Activated CD4-positive, alpha-beta T cell treated with anti-CD3 and anti-CD28 coated beads for 36 hours (primary cell): ENCODE measurements at regions of chr4 and their contacts with region 1.

Region 1: DNA sequence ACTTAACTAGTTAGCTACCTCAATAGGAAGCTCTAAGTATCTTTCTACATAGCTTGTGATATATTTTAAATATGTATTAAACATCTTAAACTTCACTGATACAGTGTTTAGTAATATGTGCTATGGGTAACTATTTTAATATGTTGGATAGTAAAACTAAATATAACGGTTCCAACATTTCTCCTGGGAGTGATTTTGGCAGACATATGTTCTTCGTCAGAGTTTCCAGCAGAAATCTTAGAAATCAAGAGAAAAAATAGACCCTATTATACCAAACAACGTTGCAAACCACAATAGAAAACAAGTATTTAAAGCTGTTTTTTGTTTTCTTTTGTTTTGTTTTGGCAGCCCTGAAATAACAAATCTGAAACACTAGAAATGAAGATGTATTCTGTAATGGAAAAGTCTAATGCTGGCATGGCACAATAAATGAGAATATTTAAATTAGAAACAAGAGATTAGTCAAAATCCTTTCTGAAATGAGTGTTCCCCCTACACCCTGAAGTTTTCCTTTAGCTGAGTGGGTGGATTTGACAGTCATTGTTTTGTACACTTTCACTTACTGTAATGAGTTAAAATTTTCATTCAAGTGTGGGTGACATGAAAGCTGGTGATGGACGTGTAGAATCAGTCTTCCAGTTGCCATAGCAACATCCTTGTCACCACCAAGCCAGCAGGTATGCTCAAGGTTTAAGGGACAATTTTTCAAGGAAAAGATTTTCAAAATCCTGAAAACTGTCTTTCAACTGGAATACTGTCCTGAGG is 233.5 kb downstream of the SCFD2 start:
- DNase-seq: peak; percentile 49
- ATAC-seq: peak; percentile 83
- H3K4me3 Mint-ChIP-seq: no peak overlapping the region
- H3K27ac Mint-ChIP-seq: peak overlapping the region; percentile 88
- H3K4me1 Mint-ChIP-seq: peaks cover 34% of the 10 kb centered on the region
- H3K27me3 Mint-ChIP-seq: no peaks in the 10 kb centered on the region

Region 2: GRCh38 chr4:53068755-53069330 is 63.5 kb before region 1 on chr4:
- CTCF ChIA-PET with region 1: no interaction called
- POLR2A ChIA-PET with region 1: no interaction called
- intact Hi-C with region 1: no loop called
- DNase-seq: no peak
- ATAC-seq: no peak
- H3K4me3 Mint-ChIP-seq: no peak overlapping the region
- H3K27ac Mint-ChIP-seq: no peak overlapping the region
- H3K4me1 Mint-ChIP-seq: peaks cover 6% of the 10 kb centered on the region
- H3K27me3 Mint-ChIP-seq: no peaks in the 10 kb centered on the region

Region 3: DNA sequence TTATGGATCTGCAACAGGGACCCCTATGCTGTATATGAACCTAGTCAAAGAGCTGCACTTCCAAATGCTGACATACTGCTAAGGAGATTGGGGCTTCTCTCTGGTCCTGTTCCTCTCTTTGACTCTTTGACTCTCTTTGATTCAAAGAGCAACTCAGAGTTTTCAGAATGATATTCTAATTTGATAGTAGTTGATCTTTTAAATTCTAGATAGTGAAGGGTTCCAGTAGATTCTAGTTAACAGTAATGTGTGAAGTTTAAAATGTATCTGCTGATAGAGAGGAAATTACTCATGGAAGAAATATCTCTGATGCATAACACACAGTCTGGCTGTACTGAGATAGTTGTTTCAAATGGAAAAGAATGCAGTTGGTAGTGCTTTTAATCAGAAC is 31.1 kb before region 1 on chr4:
- CTCF ChIA-PET with region 1: no interaction called
- POLR2A ChIA-PET with region 1: no interaction called
- intact Hi-C with region 1: loop called (anchors 1 kb)
- DNase-seq: no peak
- ATAC-seq: peak; percentile 95
- H3K4me3 Mint-ChIP-seq: no peak overlapping the region
- H3K27ac Mint-ChIP-seq: peak overlapping the region; percentile 74
- H3K4me1 Mint-ChIP-seq: peaks cover 22% of the 10 kb centered on the region
- H3K27me3 Mint-ChIP-seq: no peaks in the 10 kb centered on the region

Region 4: DNA sequence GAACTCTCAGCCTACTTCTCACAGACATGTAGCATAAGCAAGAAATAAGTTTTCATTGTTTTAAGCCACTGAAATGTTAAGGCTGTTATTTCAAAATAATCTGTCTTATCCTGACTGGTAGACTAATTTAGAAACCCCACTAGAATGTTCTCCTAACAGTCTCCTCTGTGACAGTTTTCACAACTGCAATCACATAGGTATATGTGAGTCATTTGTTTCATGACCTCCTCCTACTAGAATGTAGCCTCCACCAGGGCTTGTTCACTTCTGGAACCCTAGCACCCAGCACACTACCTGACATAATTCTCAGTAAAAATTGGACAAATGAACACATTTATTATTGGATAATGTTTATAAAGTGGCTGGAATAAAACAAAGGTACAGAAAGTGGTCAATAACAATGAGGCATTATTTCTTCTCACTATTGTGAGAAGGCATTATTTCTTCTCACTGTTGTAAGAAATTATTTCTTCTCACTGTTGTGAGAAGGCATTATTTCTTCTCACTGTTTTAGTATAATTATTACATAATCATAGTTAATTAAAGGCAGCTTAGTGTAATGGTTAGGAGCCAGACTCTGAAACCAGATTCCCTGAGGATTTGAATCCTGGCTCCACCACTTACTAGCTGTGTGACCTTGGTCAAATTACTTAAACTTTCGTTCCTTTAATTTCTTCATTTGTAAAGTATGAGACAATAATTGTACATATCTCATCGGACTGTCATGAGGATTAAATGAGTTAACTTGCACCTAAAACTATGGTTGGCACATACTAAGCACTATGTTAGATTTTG is 18.7 kb before region 1 on chr4:
- CTCF ChIA-PET with region 1: interaction called, 4 read pairs
- POLR2A ChIA-PET with region 1: no interaction called
- intact Hi-C with region 1: loop called (anchors 1 kb)
- DNase-seq: peak; percentile 38
- ATAC-seq: peak; percentile 99
- H3K4me3 Mint-ChIP-seq: no peak overlapping the region
- H3K27ac Mint-ChIP-seq: peak overlapping the region; percentile 91
- H3K4me1 Mint-ChIP-seq: peaks cover 33% of the 10 kb centered on the region
- H3K27me3 Mint-ChIP-seq: no peaks in the 10 kb centered on the region

Region 5: GRCh38 chr4:53365486-53366300 is 233.4 kb after region 1 on chr4 and contains the start of gene SCFD2:
- CTCF ChIA-PET with region 1: no interaction called
- POLR2A ChIA-PET with region 1: no interaction called
- intact Hi-C with region 1: loop called in 1 of 2 experiments (anchors 5 kb)
- DNase-seq: peak; percentile 98
- ATAC-seq: peak; percentile 98
- H3K4me3 Mint-ChIP-seq: peak within 1 kb of the TSS; percentile 95
- H3K27ac Mint-ChIP-seq: peak within 1 kb of the TSS; percentile 95
- H3K4me1 Mint-ChIP-seq: peaks cover 47% of the 10 kb centered on the region
- H3K27me3 Mint-ChIP-seq: peaks cover 5% of the 10 kb centered on the region
- total RNA-seq, gene SCFD2: 21.6 to 22.5 TPM

Region 6: GRCh38 chr4:53432528-53433424 is 300.5 kb after region 1 on chr4:
- CTCF ChIA-PET with region 1: no interaction called
- POLR2A ChIA-PET with region 1: no interaction called
- intact Hi-C with region 1: loop called in 1 of 2 experiments (anchors 5 kb)
- DNase-seq: no peak
- ATAC-seq: peak; percentile 81
- H3K4me3 Mint-ChIP-seq: no peak overlapping the region
- H3K27ac Mint-ChIP-seq: no peak overlapping the region
- H3K4me1 Mint-ChIP-seq: peaks cover 26% of the 10 kb centered on the region
- H3K27me3 Mint-ChIP-seq: no peaks in the 10 kb centered on the region